ENCODE measurements at regions of chr12 and their contacts with region 1.

Region 1: DNA sequence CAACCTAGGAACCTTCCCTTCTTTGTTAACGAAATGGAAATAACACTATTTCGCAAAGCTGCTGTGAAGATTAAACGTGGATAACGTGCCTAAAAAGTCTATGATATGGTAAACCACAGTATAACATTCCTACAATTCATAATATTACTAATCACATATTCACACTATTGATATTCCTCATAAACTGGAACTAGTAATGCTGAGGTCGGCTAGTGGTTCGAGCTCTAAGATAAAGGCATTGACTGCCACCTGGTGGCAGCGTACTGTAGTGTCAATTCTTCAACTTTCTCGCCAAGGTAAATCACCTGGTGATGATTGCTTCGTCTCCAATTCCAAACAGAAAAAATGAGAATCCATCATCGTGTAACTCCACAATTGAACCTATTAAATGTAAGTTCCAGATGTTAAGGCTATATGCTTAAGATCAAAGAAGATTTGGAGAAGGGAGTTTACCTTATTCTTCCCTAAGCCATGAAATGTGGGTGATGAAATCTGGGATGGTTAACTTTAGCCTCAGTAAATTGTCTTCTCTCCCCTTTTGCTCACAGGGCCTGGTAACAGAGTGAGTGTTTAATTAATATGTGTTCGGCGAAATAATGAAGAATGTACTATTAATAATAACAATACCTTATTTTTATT is 197.5 kb upstream of the TMEM132C start:
- DNase-seq: peak in 1 of 2 experiments; percentile 65
- H3K4me3 ChIP-seq: no peak overlapping the region
- H3K27ac ChIP-seq: no peak overlapping the region
- H3K4me1 ChIP-seq: no peaks in the 10 kb centered on the region
- H3K27me3 ChIP-seq: no peaks in the 10 kb centered on the region
- CTCF ChIP-seq: peak; percentile 12 to 84 (median 69)
- EP300 ChIP-seq: no peak
- POLR2A ChIP-seq: no peak
- RAD21 ChIP-seq: peak; percentile 87 to 91

Region 2: GRCh38 chr12:127879510-127879909 is 190.0 kb before region 1 on chr12:
- CTCF ChIA-PET with region 1: no interaction called
- POLR2A ChIA-PET with region 1: no interaction called
- DNase-seq: no peak
- H3K4me3 ChIP-seq: no peak overlapping the region
- H3K27ac ChIP-seq: no peak overlapping the region
- H3K4me1 ChIP-seq: peaks cover 0 to 2% (median under 1%) of the 10 kb centered on the region in 4 experiments; a peak in 2 of 7 replicates
- H3K27me3 ChIP-seq: no peaks in the 10 kb centered on the region
- CTCF ChIP-seq: no peak
- EP300 ChIP-seq: no peak
- POLR2A ChIP-seq: no peak
- RAD21 ChIP-seq: no peak

Region 3: DNA sequence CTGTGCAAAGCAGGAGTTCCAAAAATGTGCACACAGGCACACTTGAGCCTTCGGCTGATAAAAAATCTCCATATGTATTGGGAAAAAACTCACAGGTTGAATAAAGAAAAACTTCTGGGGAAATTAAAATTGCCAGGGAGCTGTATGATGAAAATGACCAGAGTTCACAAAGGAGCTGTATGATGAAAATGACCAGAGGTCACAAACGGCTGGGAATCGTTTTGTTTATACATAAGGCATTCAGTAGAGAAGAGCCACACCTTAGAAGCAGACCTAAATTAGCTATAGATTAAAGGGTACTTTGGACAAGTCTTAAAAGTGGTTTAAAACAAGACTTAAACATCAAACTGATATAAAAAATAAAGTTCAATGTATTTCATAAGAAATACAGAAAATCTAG is 54.2 kb before region 1 on chr12:
- CTCF ChIA-PET with region 1: interaction called, 10 read pairs
- POLR2A ChIA-PET with region 1: no interaction called
- DNase-seq: no peak
- H3K4me3 ChIP-seq: no peak overlapping the region
- H3K27ac ChIP-seq: no peak overlapping the region
- H3K4me1 ChIP-seq: no peaks in the 10 kb centered on the region
- H3K27me3 ChIP-seq: no peaks in the 10 kb centered on the region
- CTCF ChIP-seq: no peak
- EP300 ChIP-seq: no peak
- POLR2A ChIP-seq: no peak
- RAD21 ChIP-seq: no peak

Region 4: GRCh38 chr12:128056136-128056801 is 13.2 kb before region 1 on chr12:
- CTCF ChIA-PET with region 1: interaction called, 37 read pairs
- POLR2A ChIA-PET with region 1: no interaction called
- DNase-seq: peak in 1 of 2 experiments; percentile 54
- H3K4me3 ChIP-seq: no peak overlapping the region
- H3K27ac ChIP-seq: no peak overlapping the region
- H3K4me1 ChIP-seq: peaks cover 2 to 11% (median 6%) of the 10 kb centered on the region in 4 experiments; a peak in 6 of 7 replicates
- H3K27me3 ChIP-seq: no peaks in the 10 kb centered on the region
- CTCF ChIP-seq: no peak; a peak in 1 of 4 replicates
- EP300 ChIP-seq: no peak
- POLR2A ChIP-seq: no peak
- RAD21 ChIP-seq: peak; percentile 18 to 24; a peak in 2 of 4 replicates